Transverse colon (tissue), 4 donors: ENCODE measurements at regions of chr11 and their contacts with region 1.

Region 1: GRCh38 chr11:113896156-113896879 is 8.3 kb upstream of the HTR3B start:
- DNase-seq: peak; percentile 39
- H3K4me3 ChIP-seq: no peak overlapping the region
- H3K27ac ChIP-seq: no peak overlapping the region
- H3K4me1 ChIP-seq: no peaks in the 10 kb centered on the region
- H3K27me3 ChIP-seq: no peaks in the 10 kb centered on the region
- CTCF ChIP-seq: peak; percentile 65 to 81 (median 78)
- EP300 ChIP-seq: no peak
- POLR2A ChIP-seq: no peak

Region 2: DNA sequence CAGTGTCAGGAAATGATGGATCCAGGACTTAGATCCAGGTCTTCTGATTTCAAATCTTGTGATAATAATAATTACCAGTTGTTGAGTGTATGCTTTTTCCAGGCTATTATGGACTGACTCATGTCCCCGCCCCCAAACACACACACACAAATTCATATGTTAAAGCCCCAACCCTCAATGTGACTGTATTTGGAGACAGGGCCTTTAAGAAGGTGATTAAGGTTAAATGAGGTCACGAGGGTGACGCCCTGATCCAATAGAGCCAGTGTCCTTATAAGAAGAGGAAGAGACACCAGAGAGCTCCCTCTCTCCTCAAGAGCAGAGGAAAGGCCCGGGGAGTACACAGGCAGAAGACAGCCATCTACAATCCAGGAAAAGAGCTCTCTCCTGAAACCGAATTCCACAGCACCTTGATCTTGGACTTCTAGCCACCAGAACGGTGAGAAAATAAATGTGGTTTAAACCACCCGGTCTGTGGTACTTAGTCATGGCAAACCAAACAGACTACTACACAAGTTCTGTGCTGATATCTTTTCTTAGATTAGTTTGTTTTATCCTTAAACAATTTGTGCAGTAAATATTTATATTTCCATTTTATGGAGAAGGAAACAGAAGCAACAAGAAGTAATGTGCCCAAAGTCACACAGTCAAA is 198.4 kb before region 1 on chr11:
- in situ Hi-C with region 1: no loop called
- intact Hi-C with region 1: no loop called
- DNase-seq: no peak
- H3K4me3 ChIP-seq: no peak overlapping the region
- H3K27ac ChIP-seq: no peak overlapping the region
- H3K4me1 ChIP-seq: no peaks in the 10 kb centered on the region
- H3K27me3 ChIP-seq: no peaks in the 10 kb centered on the region
- CTCF ChIP-seq: no peak
- EP300 ChIP-seq: no peak
- POLR2A ChIP-seq: no peak

Region 3: GRCh38 chr11:113856966-113857759 is 39.2 kb before region 1 on chr11:
- in situ Hi-C with region 1: no loop called
- intact Hi-C with region 1: loop called (anchors 2 kb)
- DNase-seq: no peak
- H3K4me3 ChIP-seq: no peak overlapping the region
- H3K27ac ChIP-seq: no peak overlapping the region
- H3K4me1 ChIP-seq: peaks cover 0 to 21% (median 10%) of the 10 kb centered on the region in 4 donors
- H3K27me3 ChIP-seq: no peaks in the 10 kb centered on the region
- CTCF ChIP-seq: no peak
- EP300 ChIP-seq: no peak
- POLR2A ChIP-seq: no peak